Cardiac septum (tissue), 1 donor: ENCODE measurements at regions of chr19 and their contacts with region 1.

Region 1: GRCh38 chr19:32345261-32346207 is at the start of gene ZNF507:
- DNase-seq: peak; percentile 93
- total RNA-seq, gene ZNF507: 21.5 TPM

Region 2: DNA sequence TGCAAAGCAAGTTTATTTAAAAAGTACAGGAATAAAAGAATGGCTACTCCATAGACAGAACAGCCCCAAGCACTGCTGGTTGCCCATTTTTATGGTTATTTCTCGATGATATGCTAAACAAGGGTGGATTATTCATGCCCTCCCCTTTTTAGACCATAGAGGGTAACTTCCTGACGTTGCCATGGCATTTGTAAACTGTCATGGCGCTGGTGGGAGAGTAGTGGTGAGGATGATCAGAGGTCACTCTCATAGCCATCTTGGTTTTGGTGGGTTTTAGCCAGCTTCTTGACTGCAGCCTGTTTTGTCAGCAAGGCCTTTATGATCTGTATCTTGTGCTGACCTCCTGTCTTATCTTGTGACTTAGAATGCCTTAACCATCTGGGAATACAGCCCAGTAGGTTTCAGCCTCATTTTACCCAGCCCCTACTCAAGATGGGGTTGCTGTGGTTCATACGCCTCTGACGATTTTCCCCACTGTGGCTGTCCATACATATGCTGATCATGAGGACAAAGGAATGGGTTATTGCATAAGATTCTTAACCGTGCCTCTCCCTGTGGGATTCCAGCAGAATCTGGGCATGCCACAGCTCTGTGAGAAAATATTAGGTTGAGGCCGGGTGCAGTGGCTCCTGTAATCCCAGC is 37.0 kb before region 1 on chr19:
- intact Hi-C with region 1: no loop called
- DNase-seq: no peak

Region 3: GRCh38 chr19:32405431-32406161 is 60.1 kb after region 1 on chr19 and contains the start of gene DPY19L3:
- intact Hi-C with region 1: loop called (anchors 5 kb)
- DNase-seq: peak; percentile 98
- total RNA-seq, gene DPY19L3: 8.6 TPM

Region 4: DNA sequence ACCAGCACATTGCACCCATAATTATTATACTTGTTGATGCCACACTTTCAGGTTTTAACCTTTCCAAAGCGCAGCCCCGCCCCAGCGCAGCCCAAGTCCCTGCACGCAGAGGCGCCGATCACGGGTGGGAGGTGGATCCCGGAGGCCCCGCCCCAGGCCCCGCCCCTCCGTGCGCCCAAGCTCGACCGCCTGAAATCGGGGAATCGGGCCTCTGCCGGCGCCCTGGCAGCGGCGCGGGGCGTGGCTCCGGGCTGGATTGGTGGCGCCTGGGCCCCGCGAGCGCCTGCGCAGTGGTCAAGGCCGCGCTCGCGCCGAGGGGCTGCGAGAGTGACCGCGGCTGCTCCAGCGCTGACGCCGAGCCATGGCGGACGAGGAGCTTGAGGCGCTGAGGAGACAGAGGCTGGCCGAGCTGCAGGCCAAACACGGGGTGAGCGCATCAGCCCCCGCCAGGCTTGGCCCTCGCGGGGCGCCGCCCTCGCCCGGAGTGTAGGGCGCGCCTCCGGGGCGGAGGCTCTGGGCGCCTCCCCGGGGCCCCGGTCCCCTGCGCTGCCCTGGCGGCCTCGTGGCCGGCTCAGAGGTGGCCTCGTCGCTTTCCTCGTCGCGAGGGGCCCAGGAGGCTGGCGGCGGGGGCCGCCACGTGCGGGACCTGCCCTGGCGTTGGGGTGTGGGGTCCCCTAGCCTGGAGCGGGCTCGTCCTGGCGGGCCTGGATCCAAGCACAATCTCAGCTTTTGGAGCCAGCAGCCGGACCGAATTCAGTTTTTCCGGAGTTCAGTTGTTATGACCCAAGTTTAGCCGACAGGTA is 235.6 kb after region 1 on chr19 and contains the start of gene PDCD5:
- intact Hi-C with region 1: loop called (anchors 5 kb)
- DNase-seq: peak; percentile 97
- total RNA-seq, gene PDCD5: 111 TPM

Region 5: DNA sequence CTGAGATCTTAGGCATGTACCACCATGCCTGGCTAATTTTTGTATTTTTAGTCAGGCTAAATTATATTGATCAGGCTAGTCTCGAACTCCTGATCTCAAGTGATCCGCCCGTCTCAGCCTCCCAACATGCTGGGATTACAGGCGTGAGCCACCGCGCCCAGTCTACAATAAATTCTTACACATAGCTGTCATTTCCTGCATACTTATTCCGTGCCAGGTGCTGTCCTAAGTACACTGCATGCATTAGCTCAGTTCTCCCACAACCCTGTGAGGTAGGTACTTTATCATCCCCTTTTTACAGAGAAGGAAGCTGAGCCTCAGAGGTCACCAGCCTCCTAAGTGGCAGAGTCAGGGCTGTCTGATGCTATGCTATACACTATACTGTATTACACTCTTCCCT is 726.4 kb after region 1 on chr19:
- intact Hi-C with region 1: loop called (anchors 10 kb)
- DNase-seq: no peak